Activated CD8-positive, alpha-beta T cell treated with anti-CD3 and anti-CD28 coated beads for 36 hours (primary cell): ENCODE measurements at regions of chr3 and their contacts with region 1.

Region 1: GRCh38 chr3:141311496-141312353 is 56.6 kb upstream of the ZBTB38 start:
- DNase-seq: peak; percentile 99
- ATAC-seq: peak; percentile 94
- H3K4me3 Mint-ChIP-seq: peak overlapping the region; percentile 89
- H3K27ac Mint-ChIP-seq: peak overlapping the region; percentile 99
- H3K4me1 Mint-ChIP-seq: peaks cover 49% of the 10 kb centered on the region
- H3K27me3 Mint-ChIP-seq: no peaks in the 10 kb centered on the region
- CTCF ChIP-seq: peak; percentile 77

Region 2: DNA sequence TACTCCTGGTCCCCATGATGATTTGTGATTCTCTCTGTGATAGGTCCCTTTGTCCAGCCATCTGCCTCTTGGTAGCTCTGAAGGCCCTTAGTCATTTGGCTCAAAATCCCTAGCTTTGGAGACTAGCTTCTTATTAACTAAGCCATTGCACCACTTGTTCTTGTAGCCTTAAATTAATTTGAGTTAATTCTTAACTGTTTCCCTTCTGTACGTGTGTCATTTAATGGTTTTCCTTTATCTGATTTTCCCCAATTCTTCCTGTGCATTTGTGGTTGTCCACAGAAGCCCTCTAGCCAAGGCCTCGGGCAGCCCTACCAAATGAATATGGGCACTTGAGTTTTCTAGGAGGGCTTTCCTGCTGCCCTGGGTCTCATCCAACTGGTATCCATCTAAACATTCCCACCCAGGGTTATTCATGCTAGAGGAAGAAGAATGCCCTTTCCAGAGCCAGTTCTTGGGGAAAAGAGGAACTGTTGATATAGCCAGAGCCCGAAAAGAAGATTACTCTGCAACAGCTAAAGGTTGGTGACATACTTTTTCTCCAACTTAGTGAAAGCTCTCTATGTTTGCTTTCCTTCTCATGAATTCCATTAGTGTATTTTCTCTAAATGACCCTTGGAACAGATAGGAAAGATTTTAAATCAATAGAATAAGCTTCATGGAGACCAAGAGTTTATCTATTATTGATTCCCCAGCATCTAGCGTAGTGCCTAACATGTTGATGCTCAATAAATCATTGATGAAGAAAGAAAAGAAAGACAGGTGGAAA is 12.4 kb after region 1 on chr3:
- CTCF ChIA-PET with region 1: interaction called, 22 read pairs
- POLR2A ChIA-PET with region 1: interaction called, 5 read pairs
- intact Hi-C with region 1: no loop called
- DNase-seq: no peak
- ATAC-seq: no peak
- H3K4me3 Mint-ChIP-seq: no peak overlapping the region
- H3K27ac Mint-ChIP-seq: no peak overlapping the region
- H3K4me1 Mint-ChIP-seq: peaks cover 38% of the 10 kb centered on the region
- H3K27me3 Mint-ChIP-seq: no peaks in the 10 kb centered on the region
- CTCF ChIP-seq: no peak

Region 3: DNA sequence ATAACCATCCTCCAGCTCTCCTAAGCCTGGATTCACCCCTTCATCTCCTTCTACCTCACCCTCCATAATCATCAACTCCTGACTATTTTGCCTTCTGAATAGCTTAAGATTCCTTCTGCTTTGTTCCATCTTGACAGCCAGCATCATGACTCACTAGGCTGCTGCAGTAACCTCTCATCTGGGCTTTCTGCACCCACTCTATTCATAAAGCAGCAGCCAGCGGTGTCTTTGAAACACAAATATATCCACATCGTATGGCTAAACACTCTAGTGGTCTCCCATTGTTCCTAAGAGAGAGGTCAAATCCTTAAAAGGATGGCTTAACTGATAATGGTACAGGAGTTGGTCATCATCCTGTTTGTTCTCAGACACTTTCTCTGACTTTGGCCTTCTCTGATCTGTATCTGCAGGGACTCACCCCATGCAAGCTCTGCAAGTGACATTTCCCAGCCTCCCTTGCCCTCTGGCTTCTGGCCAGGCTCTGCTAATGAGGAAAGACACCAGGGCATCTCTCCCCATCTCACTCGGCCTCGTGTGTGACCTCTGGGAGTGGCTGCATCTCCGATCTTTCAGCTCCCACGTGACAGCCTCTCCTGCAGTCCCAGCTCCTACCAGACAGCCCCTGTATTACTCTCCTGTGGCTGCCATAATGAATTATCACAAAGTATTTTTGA is 457.6 kb after region 1 on chr3:
- CTCF ChIA-PET with region 1: no interaction called
- POLR2A ChIA-PET with region 1: no interaction called
- intact Hi-C with region 1: no loop called
- DNase-seq: no peak
- ATAC-seq: no peak
- H3K4me3 Mint-ChIP-seq: no peak overlapping the region
- H3K27ac Mint-ChIP-seq: no peak overlapping the region
- H3K4me1 Mint-ChIP-seq: peaks cover 2% of the 10 kb centered on the region
- H3K27me3 Mint-ChIP-seq: no peaks in the 10 kb centered on the region
- CTCF ChIP-seq: no peak